ENCODE measurements at regions of chr17 and their contacts with region 1.

Region 1: DNA sequence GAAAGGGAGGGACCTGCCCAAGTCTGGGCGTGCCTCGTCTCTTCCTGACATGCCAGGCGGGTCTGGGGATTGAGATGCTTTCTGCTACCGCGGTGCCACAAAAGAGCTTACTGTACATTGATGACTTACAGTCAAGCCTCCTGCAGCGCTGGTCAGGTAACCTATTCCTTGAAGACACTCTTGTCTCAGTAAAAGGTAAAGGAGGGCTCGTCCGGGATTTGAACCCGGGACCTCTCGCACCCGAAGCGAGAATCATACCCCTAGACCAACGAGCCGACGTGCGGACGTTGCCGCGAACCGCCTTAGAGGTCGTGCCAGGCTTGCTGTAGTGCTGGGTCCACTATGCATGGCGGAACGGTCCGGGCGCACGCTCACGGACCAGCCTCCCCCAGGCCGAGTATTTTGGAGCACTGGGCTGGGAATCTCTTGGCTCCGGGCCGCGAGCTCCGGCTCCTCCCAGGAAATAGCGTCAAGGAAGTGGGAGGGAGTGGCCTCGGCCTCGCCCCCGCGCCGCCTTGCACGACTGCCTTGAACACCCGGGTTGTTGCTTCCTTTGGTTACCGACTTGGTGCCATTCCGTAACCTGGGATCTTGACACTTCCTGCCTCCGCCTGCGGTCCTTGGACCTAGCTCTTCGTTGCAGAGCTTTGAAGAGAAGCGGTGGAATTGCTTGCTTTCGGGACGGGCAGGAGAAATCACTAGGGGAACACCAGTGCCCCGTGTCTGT is 12.4 kb upstream of the AURKB start:
- DNase-seq: peak; percentile 80 to 96 (median 90)
- ATAC-seq: peak; percentile 45 to 47
- H3K4me3 Mint-ChIP-seq: peak overlapping the region; percentile 91 to 99 (median 96)
- H3K27ac Mint-ChIP-seq: peak overlapping the region; percentile 93 to 100 (median 98)
- H3K4me1 Mint-ChIP-seq: peaks cover 43 to 72% (median 66%) of the 10 kb centered on the region in 4 donors
- H3K27me3 Mint-ChIP-seq: peaks cover 0 to 19% (median 0%) of the 10 kb centered on the region in 5 donors

Region 2: DNA sequence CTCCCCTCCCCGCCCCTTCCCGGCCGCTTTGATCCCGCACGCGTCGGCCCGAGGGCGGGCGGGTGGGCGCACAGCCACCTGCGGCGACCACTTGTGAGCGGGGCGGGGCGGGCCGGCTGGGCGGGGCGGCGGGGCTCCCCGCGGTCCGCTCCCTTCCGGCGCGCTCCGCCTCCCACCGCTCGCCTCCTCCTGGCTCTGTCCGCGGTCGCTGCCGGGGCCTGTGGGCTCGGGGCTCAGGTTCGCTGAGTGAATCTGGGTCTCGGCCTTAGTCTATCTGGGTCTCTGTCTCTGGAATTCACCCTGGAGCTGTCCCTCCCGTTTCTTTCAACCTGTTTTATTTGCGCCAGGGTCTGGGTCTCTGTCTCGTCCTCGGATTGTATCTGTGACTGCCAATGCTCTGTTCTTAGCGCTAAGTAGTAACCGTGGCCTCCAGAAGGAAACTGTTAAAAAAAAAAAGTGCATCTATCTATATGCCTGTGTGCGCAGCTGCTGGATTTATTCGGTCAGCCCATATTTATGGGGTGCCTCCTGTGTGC is 96.2 kb before region 1 on chr17:
- POLR2A ChIA-PET with region 1: interaction called, 27 read pairs
- DNase-seq: peak in 7 of 10 donors; percentile 31 to 61 (median 45)
- ATAC-seq: peak; percentile 37 to 39
- H3K4me3 Mint-ChIP-seq: peak overlapping the region; percentile 91 to 97 (median 94)
- H3K27ac Mint-ChIP-seq: peak overlapping the region; percentile 69 to 100 (median 76)
- H3K4me1 Mint-ChIP-seq: peaks cover 35 to 53% (median 46%) of the 10 kb centered on the region in 4 donors
- H3K27me3 Mint-ChIP-seq: peaks cover 0 to 35% (median 21%) of the 10 kb centered on the region in 5 donors

Region 3: DNA sequence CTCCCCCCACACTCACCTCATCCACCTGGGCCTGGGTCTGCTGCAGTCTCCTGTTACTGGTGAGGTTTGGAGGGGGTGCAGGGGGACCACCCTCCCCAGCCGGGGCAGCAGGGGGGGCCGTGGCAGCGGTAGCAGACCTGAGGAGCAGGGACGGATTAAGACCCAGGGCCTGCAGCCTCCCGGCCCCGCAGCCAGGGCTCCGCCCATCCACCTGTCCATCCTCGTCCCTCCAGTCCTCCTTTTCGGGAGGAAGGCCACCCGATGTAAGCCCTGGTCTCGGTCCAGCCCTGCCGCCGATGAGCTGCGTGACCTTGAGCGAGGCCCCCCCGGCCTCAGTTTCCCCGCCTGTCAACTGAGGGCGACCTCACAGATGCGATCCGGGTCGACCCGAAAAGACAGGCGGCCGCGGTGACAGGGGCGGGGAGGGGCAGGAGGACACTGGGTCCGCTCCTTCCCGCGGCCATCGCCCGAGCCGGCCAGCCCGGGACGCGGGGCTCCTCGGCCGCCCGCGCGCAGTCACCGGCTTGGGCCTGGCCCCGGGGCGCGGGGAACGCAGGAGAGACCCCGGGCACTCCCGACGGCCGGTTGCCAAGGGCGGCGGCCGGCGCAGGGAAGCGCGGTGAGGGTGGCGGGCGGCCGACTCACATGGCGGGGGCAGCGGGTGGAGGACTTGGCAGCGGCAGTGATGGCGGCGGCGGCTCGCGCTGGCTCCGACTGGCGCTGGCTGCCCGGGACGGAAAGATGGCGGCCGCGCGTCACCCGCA is 60.4 kb before region 1 on chr17 and contains the start of gene VAMP2:
- POLR2A ChIA-PET with region 1: interaction called, 130 read pairs
- DNase-seq: peak; percentile 75 to 92 (median 87)
- ATAC-seq: peak; percentile 61 to 66
- H3K4me3 Mint-ChIP-seq: peak within 1 kb of the TSS; percentile 86 to 96 (median 90)
- H3K27ac Mint-ChIP-seq: peak within 1 kb of the TSS; percentile 95 to 99 (median 98)
- H3K4me1 Mint-ChIP-seq: peaks cover 31 to 65% (median 64%) of the 10 kb centered on the region in 4 donors
- H3K27me3 Mint-ChIP-seq: no peaks in the 10 kb centered on the region
- polyA plus RNA-seq, gene VAMP2: 50.4 to 84.2 (median 64.4) TPM

Region 4: DNA sequence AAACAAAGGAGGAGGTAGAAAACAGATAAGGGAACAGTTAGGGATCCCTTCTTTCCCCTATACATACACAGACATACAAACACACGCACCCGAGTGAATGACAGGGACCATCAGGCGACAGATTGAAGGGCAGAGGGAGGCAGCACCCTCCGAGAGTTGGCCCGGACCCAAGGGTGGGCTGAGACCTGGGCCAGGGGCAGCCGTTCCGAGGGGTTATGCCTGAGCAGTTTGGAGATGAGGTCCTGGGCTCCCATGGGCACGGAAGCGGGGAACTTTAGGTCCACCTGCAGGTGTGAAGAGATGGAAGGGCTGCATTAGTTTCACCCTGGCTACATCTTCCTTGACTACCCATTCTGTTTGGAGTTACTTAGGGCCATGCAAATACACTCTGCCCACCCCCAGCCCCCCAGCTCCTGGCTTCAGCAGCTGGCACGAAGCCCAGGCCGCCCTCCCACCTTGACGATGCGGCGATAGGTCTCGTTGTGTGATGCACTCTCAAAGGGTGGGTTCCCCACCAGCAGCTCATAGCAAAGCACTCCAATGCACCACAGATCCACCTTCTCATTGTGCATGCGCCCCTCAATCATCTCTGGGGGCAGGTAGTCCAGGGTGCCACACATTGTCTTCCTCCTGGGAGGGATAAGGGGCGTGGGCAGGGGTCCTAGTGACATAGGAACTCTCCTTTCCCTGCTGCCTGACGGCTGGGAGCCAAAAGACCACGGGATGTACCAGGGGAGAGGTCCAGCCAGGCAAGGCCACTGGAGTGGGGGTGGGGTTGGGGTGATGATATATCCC is 17.8 kb before region 1 on chr17:
- POLR2A ChIA-PET with region 1: interaction called, 118 read pairs
- DNase-seq: no peak
- ATAC-seq: no peak
- H3K4me3 Mint-ChIP-seq: no peak overlapping the region
- H3K27ac Mint-ChIP-seq: peak overlapping the region in 2 of 10 donors; percentile 22 to 32
- H3K4me1 Mint-ChIP-seq: peaks cover 5 to 9% (median 7%) of the 10 kb centered on the region in 4 donors
- H3K27me3 Mint-ChIP-seq: peaks cover 0 to 2% (median 0%) of the 10 kb centered on the region in 5 donors

Region 5: DNA sequence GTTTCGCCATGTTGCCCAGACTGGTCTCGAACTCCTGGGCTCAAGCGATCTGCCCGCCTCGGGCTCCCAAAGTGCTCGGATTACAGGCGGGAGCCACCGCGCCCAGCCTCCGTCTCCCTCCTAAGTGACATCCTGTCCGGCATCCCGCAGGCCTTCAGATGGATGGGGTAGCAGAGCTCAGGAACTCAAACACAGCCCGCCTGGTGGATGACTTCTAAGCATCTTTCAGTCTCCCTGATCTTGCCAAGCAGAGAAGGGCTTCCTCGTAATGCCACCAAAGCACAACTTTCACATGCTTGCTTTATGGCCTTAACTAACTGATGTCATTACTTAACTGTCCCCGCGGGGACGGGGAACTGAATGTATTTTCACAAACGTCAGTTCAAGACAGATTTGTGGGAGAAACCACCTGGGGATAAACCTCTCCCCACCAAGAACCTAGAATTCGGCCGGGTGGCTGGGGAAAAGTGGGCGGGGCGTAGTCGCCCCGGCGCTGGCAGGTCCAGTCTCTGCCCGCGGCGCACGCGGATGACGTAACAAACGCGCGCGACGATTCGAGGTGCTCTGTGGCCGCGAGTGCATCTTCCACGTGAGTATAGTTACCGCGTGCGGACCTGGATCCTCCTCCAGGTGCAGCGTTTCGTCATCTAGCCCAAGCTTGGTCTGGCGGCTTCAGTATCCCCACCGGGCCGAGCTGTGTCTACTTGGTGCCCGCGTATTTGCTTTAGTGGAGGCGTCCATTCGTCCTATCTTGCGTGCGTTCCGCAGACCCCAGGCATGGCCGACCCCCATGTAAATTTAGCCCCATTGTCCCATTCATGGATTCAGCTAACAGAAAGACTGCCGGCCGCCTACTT is 26.2 kb after region 1 on chr17 and contains the start of gene PFAS:
- POLR2A ChIA-PET with region 1: interaction called, 437 read pairs
- DNase-seq: peak; percentile 91 to 97 (median 95)
- ATAC-seq: peak; percentile 43 to 60
- H3K4me3 Mint-ChIP-seq: peak within 1 kb of the TSS; percentile 95 to 100 (median 100)
- H3K27ac Mint-ChIP-seq: peak within 1 kb of the TSS; percentile 99 to 100 (median 100)
- H3K4me1 Mint-ChIP-seq: peaks cover 32 to 56% (median 49%) of the 10 kb centered on the region in 4 donors
- H3K27me3 Mint-ChIP-seq: no peaks in the 10 kb centered on the region
- polyA plus RNA-seq, gene PFAS: 10.1 to 20.9 (median 19.8) TPM

Region 6: GRCh38 chr17:8300627-8301242 is 77.9 kb after region 1 on chr17:
- POLR2A ChIA-PET with region 1: interaction called, 71 read pairs
- DNase-seq: peak; percentile 39 to 82 (median 58)
- ATAC-seq: peak; percentile 91 to 93
- H3K4me3 Mint-ChIP-seq: peak overlapping the region in 1 of 10 donors; percentile 42
- H3K27ac Mint-ChIP-seq: peak overlapping the region in 9 of 10 donors; percentile 12 to 90 (median 76)
- H3K4me1 Mint-ChIP-seq: peaks cover 9 to 13% (median 9%) of the 10 kb centered on the region in 4 donors
- H3K27me3 Mint-ChIP-seq: no peaks in the 10 kb centered on the region

Region 7: DNA sequence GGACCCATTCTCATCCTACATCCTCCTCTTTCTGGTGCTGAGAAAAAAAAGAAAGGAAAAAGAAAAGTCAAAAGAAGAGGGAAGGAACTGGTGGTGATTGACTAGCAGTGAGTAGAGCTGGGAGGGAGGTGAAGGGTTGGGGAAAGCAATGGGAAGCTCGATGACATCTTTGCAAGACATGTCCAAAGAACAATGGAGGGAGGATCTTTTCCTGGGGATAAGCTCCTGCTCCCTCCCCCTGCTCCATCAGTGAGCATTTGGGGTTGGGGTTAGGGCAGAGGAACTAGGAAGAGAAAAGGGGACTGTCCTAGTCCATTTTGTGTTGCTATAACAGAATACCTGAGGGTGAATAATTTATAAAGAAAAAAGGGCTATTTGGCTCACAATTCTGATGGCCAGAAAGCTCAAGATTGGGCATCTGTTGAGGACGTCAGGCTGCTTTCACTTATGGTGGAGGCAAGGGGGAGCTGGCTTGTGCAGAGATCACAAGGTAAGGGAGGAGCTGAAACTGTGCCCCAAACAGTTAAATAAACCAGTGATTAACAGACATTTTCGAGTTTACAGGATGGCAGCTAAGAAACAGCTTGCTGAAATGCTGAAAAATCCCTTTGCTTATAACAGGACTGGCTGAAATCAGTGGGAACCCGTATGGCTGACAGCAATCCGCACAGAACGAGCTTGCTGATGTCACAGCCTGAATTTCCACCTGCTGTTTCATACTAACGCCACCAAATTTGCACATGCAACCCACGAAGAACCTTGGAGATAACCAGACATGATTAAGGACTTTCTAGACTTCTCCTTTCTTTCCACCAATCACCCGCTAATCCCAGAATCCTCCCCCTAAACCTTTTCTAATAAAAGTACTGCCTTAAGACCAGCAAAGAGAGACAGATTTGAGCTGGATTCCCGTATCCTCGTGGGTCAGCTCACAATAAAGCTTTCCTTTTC is 115.3 kb after region 1 on chr17:
- POLR2A ChIA-PET with region 1: no interaction called
- DNase-seq: peak in 1 of 10 donors; percentile 9
- ATAC-seq: peak in 1 of 2 donors; percentile 46
- H3K4me3 Mint-ChIP-seq: peak overlapping the region in 6 of 10 donors; percentile 4 to 42 (median 22)
- H3K27ac Mint-ChIP-seq: peak overlapping the region in 3 of 10 donors; percentile 17 to 76 (median 45)
- H3K4me1 Mint-ChIP-seq: peaks cover 7 to 11% (median 9%) of the 10 kb centered on the region in 4 donors
- H3K27me3 Mint-ChIP-seq: peaks cover 1 to 14% (median 4%) of the 10 kb centered on the region in 5 donors

Measured in naive thymus-derived CD8-positive, alpha-beta T cell (primary cell).